ENCODE measurements at regions of chr7 and their contacts with region 1.

Region 1: GRCh38 chr7:137302081-137302480 is 41.5 kb downstream of the PTN start:
- DNase-seq: no peak
- CTCF ChIP-seq: no peak

Region 2: DNA sequence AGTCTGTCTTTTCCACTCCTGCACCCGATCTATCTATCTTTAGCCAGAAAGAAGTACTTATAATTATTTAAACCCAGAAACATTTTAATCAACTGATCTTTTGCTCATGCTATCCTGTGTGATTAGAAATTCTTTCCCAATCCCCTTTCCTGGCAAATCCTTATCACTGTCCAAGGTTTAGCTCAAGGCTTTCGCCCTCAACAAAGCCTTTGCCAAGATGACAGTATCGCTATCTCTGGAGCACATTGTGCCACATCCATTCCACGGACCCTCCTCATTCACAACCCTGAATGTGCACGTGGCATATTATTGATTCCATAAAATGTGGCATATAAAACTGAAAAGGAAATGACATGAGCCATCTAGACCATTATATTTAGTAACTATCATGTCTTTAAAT is 29.8 kb before region 1 on chr7:
- CTCF ChIA-PET with region 1: no interaction called
- POLR2A ChIA-PET with region 1: no interaction called
- DNase-seq: no peak
- CTCF ChIP-seq: no peak

Region 3: GRCh38 chr7:137287651-137288258 is 14.3 kb before region 1 on chr7:
- CTCF ChIA-PET with region 1: interaction called, 11 read pairs
- POLR2A ChIA-PET with region 1: no interaction called
- DNase-seq: no peak
- CTCF ChIP-seq: no peak

Region 4: GRCh38 chr7:137454246-137454724 is 152.2 kb after region 1 on chr7:
- CTCF ChIA-PET with region 1: no interaction called
- POLR2A ChIA-PET with region 1: no interaction called
- DNase-seq: peak; percentile 28
- CTCF ChIP-seq: peak; percentile 62